AG04449 (cell line): ENCODE measurements at regions of chr1 and their contacts with region 1.

Region 1: DNA sequence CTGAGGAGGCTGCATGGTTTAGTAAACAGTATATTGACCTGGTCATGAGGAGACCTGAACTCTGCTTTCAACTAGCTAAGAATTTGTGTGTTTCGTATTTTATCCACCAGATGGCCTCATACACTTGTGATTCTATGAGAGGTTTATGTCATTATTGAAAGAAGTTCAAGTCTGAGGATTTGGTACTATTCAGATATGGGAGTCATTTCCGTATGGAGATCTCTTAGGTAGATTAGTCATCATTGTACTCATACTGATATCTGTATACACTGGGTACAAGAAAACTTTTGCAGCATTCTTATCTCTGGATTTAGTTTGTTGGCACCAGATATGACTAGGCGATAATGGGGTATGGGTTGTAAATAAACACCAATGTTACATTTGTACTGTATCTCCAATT is 26.6 kb downstream of the ATF6 start:
- DNase-seq: peak; percentile 51
- H3K4me3 ChIP-seq: no peak overlapping the region
- CTCF ChIP-seq: peak; percentile 39

Region 2: GRCh38 chr1:161763522-161764098 is 29.1 kb before region 1 on chr1:
- CTCF ChIA-PET with region 1: no interaction called
- POLR2A ChIA-PET with region 1: no interaction called
- DNase-seq: no peak
- H3K4me3 ChIP-seq: no peak overlapping the region
- CTCF ChIP-seq: peak; percentile 26

Region 3: DNA sequence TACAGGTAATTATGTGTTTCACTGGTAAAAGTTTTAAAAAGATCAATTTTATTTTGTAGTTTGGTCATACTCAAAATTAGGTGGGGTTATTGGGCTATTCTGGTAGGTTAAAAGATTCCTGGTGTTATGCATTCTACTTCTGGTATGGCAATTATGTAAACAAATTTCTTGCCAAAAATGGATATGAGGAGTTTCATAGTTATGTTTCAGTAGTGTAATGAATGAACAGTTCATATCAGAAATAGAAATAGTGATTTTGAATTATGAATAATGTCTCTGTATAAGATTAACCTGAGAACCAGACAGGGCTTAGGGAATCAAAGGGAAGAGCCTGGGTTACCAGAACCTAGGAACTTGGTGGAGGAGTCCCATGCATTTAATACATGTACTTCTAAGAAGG is 10.7 kb before region 1 on chr1:
- CTCF ChIA-PET with region 1: interaction called, 24 read pairs
- POLR2A ChIA-PET with region 1: no interaction called
- DNase-seq: peak; percentile 5
- H3K4me3 ChIP-seq: no peak overlapping the region
- CTCF ChIP-seq: no peak

Region 4: GRCh38 chr1:161855260-161855659 is 62.5 kb after region 1 on chr1:
- CTCF ChIA-PET with region 1: interaction called, 22 read pairs
- POLR2A ChIA-PET with region 1: no interaction called
- DNase-seq: no peak
- H3K4me3 ChIP-seq: no peak overlapping the region
- CTCF ChIP-seq: no peak

Region 5: DNA sequence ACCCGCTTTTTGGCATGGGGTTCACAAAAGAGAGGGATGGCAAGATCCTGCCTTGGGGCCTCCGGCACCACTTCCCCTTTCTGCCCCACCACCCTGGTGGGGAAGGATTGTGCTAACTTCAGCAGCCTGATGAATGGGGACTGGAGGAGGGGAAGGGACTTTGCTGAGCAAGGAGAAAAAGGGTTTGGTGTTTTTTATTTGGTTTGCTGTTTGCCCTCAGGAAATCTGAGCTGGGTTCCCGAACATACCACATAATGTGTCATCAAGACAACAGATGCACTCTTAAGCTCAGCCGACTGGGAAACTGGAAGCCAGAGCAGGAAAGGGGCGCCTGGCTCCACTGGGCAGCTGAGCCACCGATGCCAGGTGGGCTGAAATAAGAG is 211.1 kb after region 1 on chr1:
- CTCF ChIA-PET with region 1: interaction called, 10 read pairs
- POLR2A ChIA-PET with region 1: no interaction called
- DNase-seq: peak; percentile 75
- H3K4me3 ChIP-seq: no peak overlapping the region
- CTCF ChIP-seq: no peak

Region 6: DNA sequence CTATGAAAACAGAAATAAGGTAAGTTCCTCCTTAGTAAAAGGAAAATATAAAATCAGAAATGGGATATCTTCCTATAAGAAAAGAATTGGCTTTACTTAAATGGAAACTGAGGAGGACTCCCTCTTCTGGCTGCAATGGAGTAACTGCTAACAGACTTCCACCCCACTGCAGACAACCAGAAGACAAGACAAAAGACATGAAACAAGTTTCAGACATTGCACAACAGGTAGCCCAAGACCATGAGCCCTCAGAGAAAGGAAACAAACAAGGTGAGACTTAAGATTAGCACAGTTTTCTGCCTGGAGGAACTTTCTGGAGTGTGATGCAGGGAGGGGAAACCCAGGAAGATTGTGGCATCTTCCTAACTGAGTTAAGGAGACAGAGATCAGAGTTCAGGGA is 247.9 kb after region 1 on chr1:
- CTCF ChIA-PET with region 1: interaction called, 797 read pairs
- POLR2A ChIA-PET with region 1: interaction called, 7 read pairs
- DNase-seq: no peak
- H3K4me3 ChIP-seq: no peak overlapping the region
- CTCF ChIP-seq: peak; percentile 55

Region 7: DNA sequence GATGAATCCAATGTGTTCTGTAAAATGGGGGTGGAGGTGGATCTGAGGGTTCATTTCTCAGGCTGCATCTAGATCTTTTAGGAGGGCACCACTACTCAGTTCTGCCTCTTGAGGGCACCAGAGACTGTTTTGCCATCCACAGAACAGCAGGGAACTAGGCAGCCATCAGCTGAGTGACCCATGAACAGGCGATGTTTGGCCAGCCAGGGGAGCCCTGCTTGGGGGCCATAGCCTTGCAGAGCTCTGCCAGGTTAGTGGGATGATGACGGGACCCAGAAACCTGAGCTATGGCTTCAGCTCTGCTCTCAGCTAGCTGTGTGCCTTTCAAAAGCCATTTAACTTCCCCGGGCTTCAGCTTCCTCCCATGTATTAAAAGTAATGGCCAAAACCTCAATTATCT is 263.3 kb after region 1 on chr1:
- CTCF ChIA-PET with region 1: interaction called, 11 read pairs
- POLR2A ChIA-PET with region 1: no interaction called
- DNase-seq: no peak
- H3K4me3 ChIP-seq: no peak overlapping the region
- CTCF ChIP-seq: peak; percentile 91